Heart right ventricle (tissue), 16 donors: ENCODE measurements at regions of chr19 and their contacts with region 1.

Region 1: GRCh38 chr19:36652958-36653357 is 13.7 kb downstream of the ZNF461 start:
- DNase-seq: no peak
- ATAC-seq: peak in 2 of 8 donors; percentile 45 to 59
- H3K4me3 ChIP-seq: no peak overlapping the region
- H3K27ac ChIP-seq: no peak overlapping the region
- H3K4me1 ChIP-seq: no peaks in the 10 kb centered on the region
- H3K27me3 ChIP-seq: no peaks in the 10 kb centered on the region
- CTCF ChIP-seq: no peak

Region 2: DNA sequence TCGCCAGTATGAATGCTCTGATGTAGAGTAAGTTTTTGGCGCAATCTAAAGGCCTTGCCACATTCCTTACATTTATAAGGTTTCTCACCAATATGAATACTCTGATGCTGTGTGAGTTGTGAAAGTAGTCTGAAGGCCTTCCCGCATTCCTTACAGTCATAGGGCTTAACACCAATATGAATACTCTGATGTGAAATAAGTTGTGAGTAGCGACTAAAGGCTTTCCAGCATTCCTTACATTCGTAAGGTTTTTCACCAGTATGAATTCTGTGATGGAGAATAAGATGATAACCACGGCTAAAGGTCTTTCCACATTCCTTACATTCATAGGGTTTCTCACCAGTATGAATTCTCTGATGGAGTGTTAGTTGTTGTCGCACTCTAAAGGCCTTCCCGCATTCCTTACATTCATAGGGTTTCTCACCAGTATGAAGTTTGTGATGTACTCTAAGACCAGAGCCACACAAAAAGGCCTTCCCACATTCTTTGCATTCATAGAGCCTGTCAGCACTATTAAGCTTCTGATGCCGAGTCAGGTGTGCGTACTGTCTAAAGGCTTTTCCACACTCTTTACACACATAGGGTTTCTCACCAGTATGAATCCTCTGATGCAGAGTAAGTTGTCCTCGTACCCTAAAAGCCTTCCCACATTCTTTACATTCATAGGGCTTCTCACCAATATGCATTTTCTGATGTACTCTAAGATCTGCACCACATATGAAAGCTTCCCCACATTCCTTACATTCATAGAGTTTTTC is 259.9 kb before region 1 on chr19:
- intact Hi-C with region 1: no loop called
- DNase-seq: no peak
- ATAC-seq: no peak
- H3K4me3 ChIP-seq: no peak overlapping the region
- H3K27ac ChIP-seq: no peak overlapping the region
- H3K4me1 ChIP-seq: no peaks in the 10 kb centered on the region
- H3K27me3 ChIP-seq: no peaks in the 10 kb centered on the region
- CTCF ChIP-seq: no peak

Region 3: DNA sequence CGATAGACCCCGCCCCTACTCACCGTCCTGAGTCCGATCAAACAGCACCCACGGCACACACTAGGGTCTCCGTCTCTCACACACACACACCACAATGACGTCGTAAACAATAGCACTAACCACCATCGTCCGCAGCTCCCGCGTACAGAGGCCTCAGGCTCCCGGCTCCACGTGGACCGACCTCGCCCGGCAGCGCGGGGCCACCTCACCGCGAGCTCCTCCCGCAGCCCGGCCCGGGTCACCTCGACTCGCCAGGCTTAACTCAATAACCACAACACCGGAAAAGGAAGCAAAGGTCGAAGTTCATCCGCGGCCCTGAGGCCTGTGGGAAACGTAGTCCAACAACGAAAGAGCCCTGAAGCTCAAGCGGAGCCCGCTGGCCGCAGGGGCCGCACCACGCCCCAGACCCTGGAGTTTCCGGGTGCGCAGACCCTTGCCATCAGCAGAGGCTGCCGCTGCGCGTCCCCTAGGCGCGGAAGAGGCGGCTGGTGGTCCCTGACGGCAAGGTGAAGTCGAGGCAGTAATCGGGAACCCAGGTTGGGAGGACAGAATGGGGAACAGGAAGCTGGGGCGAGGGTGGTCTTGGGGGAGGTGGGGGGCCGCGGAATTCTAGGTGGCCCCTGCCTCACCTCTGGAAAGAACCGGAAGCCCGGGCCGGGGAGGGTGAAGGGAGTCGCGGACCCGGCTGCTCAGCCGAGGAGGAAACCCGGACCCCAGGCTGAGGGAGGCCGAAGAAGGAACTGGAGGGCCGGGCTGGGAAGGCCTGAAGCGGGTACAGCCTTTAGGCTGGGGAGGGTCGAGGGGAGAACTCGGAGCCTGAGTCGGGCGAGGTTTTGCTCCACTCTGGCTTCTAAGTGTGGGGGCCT is 79.7 kb before region 1 on chr19 and contains the start of gene ZNF529:
- intact Hi-C with region 1: no loop called
- DNase-seq: peak; percentile 82 to 91
- ATAC-seq: peak; percentile 98 to 99 (median 99)
- H3K4me3 ChIP-seq: peak within 1 kb of the TSS; percentile 69 to 89 (median 83)
- H3K27ac ChIP-seq: peak within 1 kb of the TSS; percentile 17 to 91 (median 87)
- H3K4me1 ChIP-seq: peaks cover 3 to 26% (median 19%) of the 10 kb centered on the region in 9 donors
- H3K27me3 ChIP-seq: no peaks in the 10 kb centered on the region
- CTCF ChIP-seq: peak in 2 of 9 donors; percentile 8 to 13
- total RNA-seq, gene ZNF529: 10.7 to 18.4 (median 15.4) TPM

Region 4: DNA sequence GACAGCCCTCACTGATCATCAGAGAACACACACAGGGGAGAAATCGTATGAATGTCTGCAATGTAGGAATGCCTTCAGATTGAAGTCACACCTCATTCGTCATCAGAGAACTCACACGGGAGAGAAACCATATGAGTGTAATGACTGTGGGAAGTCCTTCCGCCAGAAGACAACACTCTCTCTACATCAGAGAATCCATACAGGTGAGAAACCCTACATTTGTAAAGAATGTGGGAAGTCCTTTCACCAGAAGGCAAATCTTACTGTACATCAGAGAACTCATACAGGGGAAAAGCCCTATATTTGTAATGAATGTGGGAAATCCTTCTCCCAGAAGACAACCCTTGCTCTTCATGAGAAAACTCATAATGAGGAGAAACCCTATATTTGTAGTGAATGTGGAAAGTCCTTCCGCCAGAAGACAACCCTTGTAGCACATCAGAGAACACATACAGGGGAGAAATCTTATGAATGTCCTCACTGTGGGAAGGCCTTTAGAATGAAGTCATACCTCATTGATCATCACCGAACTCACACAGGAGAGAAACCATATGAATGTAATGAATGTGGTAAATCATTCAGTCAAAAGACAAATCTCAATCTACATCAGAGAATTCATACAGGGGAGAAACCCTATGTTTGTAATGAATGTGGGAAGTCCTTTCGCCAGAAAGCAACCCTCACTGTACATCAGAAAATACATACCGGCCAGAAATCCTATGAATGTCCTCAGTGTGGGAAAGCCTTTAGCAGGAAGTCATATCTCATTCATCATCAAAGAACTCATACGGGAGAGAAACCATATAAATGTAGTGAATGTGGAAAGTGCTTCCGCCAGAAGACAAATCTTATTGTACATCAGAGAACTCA is 67.0 kb after region 1 on chr19:
- intact Hi-C with region 1: loop called in 1 of 10 experiments (anchors 10 kb)
- DNase-seq: no peak
- ATAC-seq: no peak
- H3K4me3 ChIP-seq: no peak overlapping the region
- H3K27ac ChIP-seq: no peak overlapping the region
- H3K4me1 ChIP-seq: no peaks in the 10 kb centered on the region
- H3K27me3 ChIP-seq: no peaks in the 10 kb centered on the region
- CTCF ChIP-seq: no peak